AG04449 (cell line): ENCODE measurements at regions of chr20 and their contacts with region 1.

Region 1: GRCh38 chr20:18632196-18633009 is 44.5 kb downstream of the DTD1 start:
- DNase-seq: no peak
- H3K4me3 ChIP-seq: no peak overlapping the region
- CTCF ChIP-seq: peak; percentile 96

Region 2: DNA sequence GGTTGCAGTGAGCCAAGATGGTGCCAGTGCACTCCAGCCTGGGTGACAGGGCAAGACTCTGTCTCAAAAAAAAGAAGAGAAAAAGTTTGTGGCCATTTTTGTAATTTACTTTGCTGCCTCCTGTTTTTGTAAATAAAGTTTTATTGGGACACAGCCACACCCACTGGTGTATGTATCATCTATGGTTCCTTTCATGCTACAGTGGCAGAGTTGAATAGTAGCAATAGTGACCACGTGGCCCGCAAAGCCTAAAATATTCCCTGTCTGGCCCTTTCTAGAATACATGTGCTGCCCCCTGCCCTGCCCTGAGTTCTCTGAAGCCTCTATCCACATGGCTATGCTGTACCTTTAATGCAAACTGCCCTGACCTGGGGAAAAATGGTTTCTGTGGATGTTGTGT is 419.4 kb before region 1 on chr20:
- CTCF ChIA-PET with region 1: no interaction called
- POLR2A ChIA-PET with region 1: no interaction called
- DNase-seq: no peak
- H3K4me3 ChIP-seq: no peak overlapping the region
- CTCF ChIP-seq: no peak

Region 3: GRCh38 chr20:18739751-18740166 is 107.4 kb after region 1 on chr20:
- CTCF ChIA-PET with region 1: interaction called, 13 read pairs
- POLR2A ChIA-PET with region 1: no interaction called
- DNase-seq: peak; percentile 71
- H3K4me3 ChIP-seq: no peak overlapping the region
- CTCF ChIP-seq: no peak